Activated CD4-positive, alpha-beta memory T cell treated with anti-CD3 and anti-CD28 coated beads for 36 hours (primary cell): ENCODE measurements at regions of chr3 and their contacts with region 1.

Region 1: GRCh38 chr3:161423911-161424522 is 52.7 kb upstream of the SPTSSB start:
- DNase-seq: no peak
- H3K4me3 Mint-ChIP-seq: no peak overlapping the region
- H3K27ac Mint-ChIP-seq: no peak overlapping the region
- H3K4me1 Mint-ChIP-seq: peaks cover 12% of the 10 kb centered on the region
- H3K27me3 Mint-ChIP-seq: no peaks in the 10 kb centered on the region

Region 2: DNA sequence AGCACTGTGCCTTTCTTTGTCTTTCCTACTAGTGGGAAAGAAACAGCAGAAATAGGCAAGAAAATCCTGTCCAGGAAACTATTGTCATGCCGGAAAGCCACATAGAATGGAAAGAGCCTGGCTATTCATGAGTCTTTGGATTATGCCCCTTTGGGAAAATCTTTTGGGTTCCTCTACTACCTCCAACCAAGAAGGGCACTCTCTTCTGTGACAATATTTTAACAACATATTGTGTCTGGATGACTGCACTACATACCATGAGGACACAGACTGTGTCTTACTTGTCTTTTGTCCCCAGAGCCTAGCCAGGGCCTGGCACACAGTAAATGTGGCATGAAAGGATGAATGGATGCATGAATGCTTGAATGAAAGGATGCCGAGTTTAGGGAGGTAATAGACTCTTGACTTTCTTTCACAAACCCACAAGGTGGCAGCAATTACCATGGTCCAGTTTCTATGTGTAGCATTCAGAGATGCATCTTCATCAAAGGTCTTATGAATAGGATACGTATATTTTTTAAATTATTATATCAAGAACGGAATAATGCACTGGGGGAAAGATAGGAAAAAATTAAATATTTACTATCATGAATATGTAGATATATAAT is 716.7 kb before region 1 on chr3:
- CTCF ChIA-PET with region 1: interaction called, 3 read pairs
- POLR2A ChIA-PET with region 1: no interaction called
- intact Hi-C with region 1: loop called (anchors 2 kb)
- DNase-seq: no peak
- H3K4me3 Mint-ChIP-seq: no peak overlapping the region
- H3K27ac Mint-ChIP-seq: no peak overlapping the region
- H3K4me1 Mint-ChIP-seq: no peaks in the 10 kb centered on the region
- H3K27me3 Mint-ChIP-seq: peaks cover 31% of the 10 kb centered on the region

Region 3: DNA sequence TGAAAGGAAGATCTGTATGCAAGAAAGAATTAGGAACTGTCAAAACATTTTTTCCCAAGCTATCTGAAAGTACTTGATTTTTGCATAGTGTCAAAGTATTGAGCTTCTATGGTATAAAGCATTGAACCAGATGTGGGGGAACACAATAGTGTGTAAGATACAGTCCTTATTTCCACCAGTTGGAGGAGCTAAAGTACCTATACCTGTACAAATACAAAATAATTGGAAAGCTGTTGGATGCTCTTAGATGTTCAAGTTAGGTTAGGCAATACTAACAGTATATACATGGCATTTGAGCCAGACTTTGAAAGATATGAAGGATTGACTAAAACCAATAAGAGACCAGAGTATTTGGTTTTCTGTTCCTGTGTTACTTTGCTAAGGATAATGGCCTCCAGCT is 467.2 kb before region 1 on chr3:
- CTCF ChIA-PET with region 1: no interaction called
- POLR2A ChIA-PET with region 1: no interaction called
- intact Hi-C with region 1: loop called (anchors 5 kb)
- DNase-seq: no peak
- H3K4me3 Mint-ChIP-seq: no peak overlapping the region
- H3K27ac Mint-ChIP-seq: no peak overlapping the region
- H3K4me1 Mint-ChIP-seq: no peaks in the 10 kb centered on the region
- H3K27me3 Mint-ChIP-seq: peaks cover 4% of the 10 kb centered on the region

Region 4: DNA sequence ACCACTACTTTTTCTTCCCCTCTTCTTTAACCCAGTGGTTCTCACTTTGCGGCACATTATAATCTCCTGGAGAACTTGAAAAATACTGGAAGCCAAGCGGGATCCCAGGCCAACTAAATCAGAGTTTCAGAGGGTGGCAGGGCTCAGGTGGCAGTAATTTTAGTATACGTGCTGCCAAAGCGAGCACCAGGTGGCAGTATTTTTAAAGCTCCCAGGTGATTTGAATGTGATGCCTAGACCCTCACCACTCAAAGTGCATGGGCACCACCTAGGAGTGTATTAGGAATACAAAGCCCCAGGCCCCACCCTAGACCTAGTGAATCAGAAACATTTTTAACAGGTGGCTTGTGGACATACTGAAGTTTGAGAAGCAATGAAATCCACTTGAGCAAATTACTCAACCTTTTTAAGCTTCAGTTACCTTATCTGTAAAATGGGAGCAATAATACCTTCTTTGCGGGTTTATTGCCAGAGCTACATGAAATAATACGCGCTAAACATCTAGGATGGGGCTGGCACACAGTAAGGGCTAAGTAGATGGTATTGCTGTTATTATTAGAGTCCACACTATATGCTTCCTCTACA is 327.2 kb before region 1 on chr3:
- CTCF ChIA-PET with region 1: interaction called, 4 read pairs
- POLR2A ChIA-PET with region 1: no interaction called
- intact Hi-C with region 1: loop called (anchors 5 kb)
- DNase-seq: peak; percentile 27
- H3K4me3 Mint-ChIP-seq: no peak overlapping the region
- H3K27ac Mint-ChIP-seq: no peak overlapping the region
- H3K4me1 Mint-ChIP-seq: no peaks in the 10 kb centered on the region
- H3K27me3 Mint-ChIP-seq: peaks cover 2% of the 10 kb centered on the region

Region 5: GRCh38 chr3:161586556-161587235 is 162.7 kb after region 1 on chr3:
- CTCF ChIA-PET with region 1: no interaction called
- POLR2A ChIA-PET with region 1: no interaction called
- intact Hi-C with region 1: no loop called
- DNase-seq: no peak
- H3K4me3 Mint-ChIP-seq: no peak overlapping the region
- H3K27ac Mint-ChIP-seq: no peak overlapping the region
- H3K4me1 Mint-ChIP-seq: no peaks in the 10 kb centered on the region
- H3K27me3 Mint-ChIP-seq: no peaks in the 10 kb centered on the region